CD4-positive, alpha-beta memory T cell (primary cell): ENCODE measurements at regions of chr4 and their contacts with region 1.

Region 1: DNA sequence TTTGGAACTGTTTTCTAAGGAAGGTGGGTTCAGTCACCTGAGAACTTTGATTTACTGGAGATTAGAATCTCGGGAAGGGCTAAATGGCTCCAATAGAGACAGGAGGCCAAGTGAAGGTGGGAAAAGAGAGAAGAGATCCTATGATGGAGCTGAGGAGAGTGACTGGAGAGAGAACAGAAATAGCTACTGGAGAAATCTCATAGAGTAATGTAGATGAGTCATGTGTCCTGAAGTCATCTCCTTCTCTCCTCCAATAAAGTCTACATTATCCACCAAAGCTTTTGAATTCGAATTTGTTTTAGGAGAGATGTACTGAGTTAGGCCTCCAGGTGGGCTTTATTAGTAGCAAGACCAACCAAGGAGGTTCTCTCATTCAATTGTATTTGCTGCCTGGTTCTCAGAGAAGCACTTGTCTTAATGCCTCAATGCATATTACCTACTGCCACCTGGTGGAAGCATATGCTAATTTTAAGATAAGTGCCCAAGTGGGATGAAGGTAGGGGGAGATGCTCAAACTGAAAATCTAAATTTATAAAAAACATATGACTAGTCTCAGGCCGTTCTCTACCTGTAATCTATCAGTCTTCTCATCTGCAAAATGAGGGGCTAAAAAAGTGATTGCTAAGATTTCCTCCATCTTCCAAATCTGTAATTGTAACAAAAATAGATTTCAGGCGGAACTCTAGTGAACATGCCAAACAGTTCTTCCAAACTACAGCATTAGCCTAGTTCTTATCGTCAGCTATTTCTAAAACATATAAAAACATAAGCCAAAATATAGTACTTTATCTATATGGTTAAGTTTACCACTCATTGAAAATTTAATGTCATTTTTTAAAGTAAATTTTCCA is 24.4 kb downstream of the TXK start:
- DNase-seq: peak in 4 of 5 donors; percentile 42 to 50 (median 48)
- H3K4me3 ChIP-seq: no peak overlapping the region
- H3K4me3 Mint-ChIP-seq: no peak overlapping the region
- H3K27ac ChIP-seq: no peak overlapping the region
- H3K27ac Mint-ChIP-seq: peak overlapping the region in 3 of 7 donors; percentile 7 to 52 (median 11)
- H3K4me1 ChIP-seq: peaks cover 38% of the 10 kb centered on the region
- H3K4me1 Mint-ChIP-seq: peaks cover 25 to 35% (median 31%) of the 10 kb centered on the region in 4 donors
- H3K27me3 ChIP-seq: no peaks in the 10 kb centered on the region
- H3K27me3 Mint-ChIP-seq: no peaks in the 10 kb centered on the region

Region 2: GRCh38 chr4:47945930-47946726 is 163.5 kb before region 1 on chr4:
- CTCF ChIA-PET with region 1: no interaction called
- POLR2A ChIA-PET with region 1: no interaction called
- intact Hi-C with region 1: no loop called
- DNase-seq: no peak
- H3K4me3 ChIP-seq: no peak overlapping the region
- H3K4me3 Mint-ChIP-seq: no peak overlapping the region
- H3K27ac ChIP-seq: no peak overlapping the region
- H3K27ac Mint-ChIP-seq: no peak overlapping the region
- H3K4me1 ChIP-seq: no peaks in the 10 kb centered on the region
- H3K4me1 Mint-ChIP-seq: no peaks in the 10 kb centered on the region
- H3K27me3 ChIP-seq: no peaks in the 10 kb centered on the region
- H3K27me3 Mint-ChIP-seq: peaks cover 0 to 3% of the 10 kb centered on the region in 2 donors

Region 3: GRCh38 chr4:48122756-48123155 is 13.1 kb after region 1 on chr4:
- CTCF ChIA-PET with region 1: interaction called, 28 read pairs
- POLR2A ChIA-PET with region 1: no interaction called
- intact Hi-C with region 1: loop called (anchors 2 kb)
- DNase-seq: no peak
- H3K4me3 ChIP-seq: no peak overlapping the region
- H3K4me3 Mint-ChIP-seq: no peak overlapping the region
- H3K27ac ChIP-seq: no peak overlapping the region
- H3K27ac Mint-ChIP-seq: no peak overlapping the region
- H3K4me1 ChIP-seq: peaks cover 90% of the 10 kb centered on the region
- H3K4me1 Mint-ChIP-seq: peaks cover 56 to 70% (median 66%) of the 10 kb centered on the region in 4 donors
- H3K27me3 ChIP-seq: no peaks in the 10 kb centered on the region
- H3K27me3 Mint-ChIP-seq: no peaks in the 10 kb centered on the region

Region 4: GRCh38 chr4:49018718-49019295 is 909.2 kb after region 1 on chr4:
- CTCF ChIA-PET with region 1: no interaction called
- POLR2A ChIA-PET with region 1: no interaction called
- intact Hi-C with region 1: no loop called
- DNase-seq: no peak
- H3K4me3 ChIP-seq: no peak overlapping the region
- H3K4me3 Mint-ChIP-seq: no peak overlapping the region
- H3K27ac ChIP-seq: no peak overlapping the region
- H3K27ac Mint-ChIP-seq: no peak overlapping the region
- H3K4me1 ChIP-seq: no peaks in the 10 kb centered on the region
- H3K4me1 Mint-ChIP-seq: no peaks in the 10 kb centered on the region
- H3K27me3 ChIP-seq: no peaks in the 10 kb centered on the region
- H3K27me3 Mint-ChIP-seq: peaks cover 4 to 8% of the 10 kb centered on the region in 2 donors